PC-9 (cell line): ENCODE measurements at regions of chr9 and their contacts with region 1.

Region 1: DNA sequence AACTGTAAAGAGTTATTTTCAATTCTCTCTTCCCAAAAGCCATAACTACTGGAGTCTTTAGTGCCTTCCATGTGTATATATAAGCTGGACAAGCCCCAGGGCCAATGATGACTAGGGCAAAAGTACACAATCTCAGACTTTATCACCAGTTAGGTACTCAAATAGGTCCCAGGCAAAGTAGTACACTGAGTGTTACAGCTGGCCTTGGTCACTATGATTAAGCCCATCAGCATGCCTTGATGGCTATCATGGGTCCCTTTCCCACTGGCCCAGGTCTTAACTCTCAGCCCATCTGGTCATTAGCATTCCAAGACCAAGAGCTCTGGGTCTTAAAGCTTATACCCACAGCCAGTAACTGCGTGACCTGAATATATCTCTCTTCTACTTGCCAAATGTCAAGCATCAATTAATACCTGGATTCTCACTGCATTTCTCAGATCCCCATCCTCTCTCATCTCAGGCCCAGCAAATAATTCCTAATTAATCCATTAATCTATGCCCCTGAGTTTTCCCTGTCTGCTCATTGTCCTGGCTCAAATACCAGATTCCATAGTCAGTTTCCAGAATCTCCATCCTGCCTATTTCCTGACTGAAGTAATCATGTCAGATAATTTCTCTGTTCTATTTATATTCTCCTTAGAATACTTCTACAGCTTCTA is 62.3 kb downstream of the NR6A1 start:
- DNase-seq: peak; percentile 47 to 93
- H3K4me3 ChIP-seq: no peak overlapping the region
- H3K27ac ChIP-seq: peak overlapping the region; percentile 57
- H3K4me1 ChIP-seq: peaks cover 36% of the 10 kb centered on the region
- H3K27me3 ChIP-seq: no peaks in the 10 kb centered on the region
- CTCF ChIP-seq: no peak

Region 2: GRCh38 chr9:124420991-124421543 is 287.7 kb before region 1 on chr9:
- CTCF ChIA-PET with region 1: interaction called, 8 read pairs
- POLR2A ChIA-PET with region 1: no interaction called
- intact Hi-C with region 1: loop called (anchors 1 kb)
- DNase-seq: no peak
- H3K4me3 ChIP-seq: no peak overlapping the region
- H3K27ac ChIP-seq: no peak overlapping the region
- H3K4me1 ChIP-seq: no peaks in the 10 kb centered on the region
- H3K27me3 ChIP-seq: no peaks in the 10 kb centered on the region
- CTCF ChIP-seq: no peak

Region 3: GRCh38 chr9:124482431-124483031 is 226.2 kb before region 1 on chr9:
- CTCF ChIA-PET with region 1: no interaction called
- POLR2A ChIA-PET with region 1: no interaction called
- intact Hi-C with region 1: no loop called
- DNase-seq: peak in 1 of 2 experiments; percentile 35
- H3K4me3 ChIP-seq: no peak overlapping the region
- H3K27ac ChIP-seq: no peak overlapping the region
- H3K4me1 ChIP-seq: no peaks in the 10 kb centered on the region
- H3K27me3 ChIP-seq: peaks cover 28% of the 10 kb centered on the region
- CTCF ChIP-seq: no peak

Region 4: GRCh38 chr9:124617471-124618141 is 91.2 kb before region 1 on chr9:
- CTCF ChIA-PET with region 1: interaction called, 22 read pairs
- POLR2A ChIA-PET with region 1: no interaction called
- intact Hi-C with region 1: loop called (anchors 1 kb)
- DNase-seq: peak; percentile 60 to 80
- H3K4me3 ChIP-seq: no peak overlapping the region
- H3K27ac ChIP-seq: peak overlapping the region; percentile 38
- H3K4me1 ChIP-seq: peaks cover 19% of the 10 kb centered on the region
- H3K27me3 ChIP-seq: no peaks in the 10 kb centered on the region
- CTCF ChIP-seq: peak; percentile 91

Region 5: GRCh38 chr9:124764774-124765438 is 56.1 kb after region 1 on chr9:
- CTCF ChIA-PET with region 1: interaction called, 4 read pairs
- POLR2A ChIA-PET with region 1: no interaction called
- intact Hi-C with region 1: loop called (anchors 1 kb)
- DNase-seq: no peak
- H3K4me3 ChIP-seq: no peak overlapping the region
- H3K27ac ChIP-seq: no peak overlapping the region
- H3K4me1 ChIP-seq: peaks cover 25% of the 10 kb centered on the region
- H3K27me3 ChIP-seq: no peaks in the 10 kb centered on the region
- CTCF ChIP-seq: peak; percentile 53; the same call in 1 of the 2 replicates

Region 6: GRCh38 chr9:125142589-125143374 is 434.0 kb after region 1 on chr9:
- CTCF ChIA-PET with region 1: no interaction called
- POLR2A ChIA-PET with region 1: no interaction called
- intact Hi-C with region 1: no loop called
- DNase-seq: peak in 1 of 2 experiments; percentile 8
- H3K4me3 ChIP-seq: peak overlapping the region; percentile 57
- H3K27ac ChIP-seq: no peak overlapping the region
- H3K4me1 ChIP-seq: peaks cover 5% of the 10 kb centered on the region; the same call in 1 of the 2 replicates
- H3K27me3 ChIP-seq: no peaks in the 10 kb centered on the region
- CTCF ChIP-seq: no peak

Region 7: GRCh38 chr9:125374443-125375309 is 665.9 kb after region 1 on chr9:
- CTCF ChIA-PET with region 1: no interaction called
- POLR2A ChIA-PET with region 1: no interaction called
- intact Hi-C with region 1: loop called (anchors 1 kb)
- DNase-seq: peak; percentile 57 to 70
- H3K4me3 ChIP-seq: peak overlapping the region; percentile 49; the same call in 1 of the 2 replicates
- H3K27ac ChIP-seq: no peak overlapping the region
- H3K4me1 ChIP-seq: no peaks in the 10 kb centered on the region
- H3K27me3 ChIP-seq: no peaks in the 10 kb centered on the region
- CTCF ChIP-seq: peak; percentile 91